PC-9 (cell line): ENCODE measurements at regions of chr10 and their contacts with region 1.

Region 1: GRCh38 chr10:69914398-69915214 is 112.9 kb downstream of the COL13A1 start:
- DNase-seq: peak in 1 of 2 experiments; percentile 72
- H3K4me3 ChIP-seq: no peak overlapping the region
- H3K27ac ChIP-seq: no peak overlapping the region
- H3K4me1 ChIP-seq: no peaks in the 10 kb centered on the region
- H3K27me3 ChIP-seq: no peaks in the 10 kb centered on the region
- CTCF ChIP-seq: peak; percentile 96

Region 2: DNA sequence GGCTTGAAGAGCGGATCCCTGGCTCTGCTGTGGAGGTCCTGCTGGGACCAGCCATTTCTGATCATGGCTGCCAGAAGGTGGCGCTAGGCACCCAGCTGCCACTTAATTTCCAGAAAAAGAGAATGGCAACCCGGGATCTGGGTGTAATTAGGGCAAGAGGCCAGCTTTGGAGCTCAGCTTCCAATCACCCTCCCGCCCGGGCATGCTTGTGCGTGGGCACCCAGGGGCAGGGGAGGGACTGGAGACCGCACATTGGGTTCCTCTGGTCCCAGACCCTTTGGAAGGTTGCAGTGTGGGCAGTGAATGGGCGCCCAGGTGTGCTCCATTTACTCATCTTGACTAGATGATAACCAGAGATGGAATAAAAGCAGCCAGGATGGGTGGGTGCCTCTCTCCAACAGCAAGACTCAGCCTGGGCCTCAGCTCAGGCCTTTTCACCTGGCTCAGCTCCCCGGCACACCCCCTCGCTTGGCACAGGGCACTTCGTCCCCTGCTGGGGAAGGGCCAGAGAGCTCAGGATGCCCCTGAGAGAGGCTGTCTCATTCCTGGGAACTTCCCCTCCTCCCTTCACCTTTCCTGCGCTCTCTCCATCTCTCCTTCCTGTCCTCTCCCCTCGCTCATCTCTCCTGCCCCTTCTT is 269.8 kb before region 1 on chr10:
- CTCF ChIA-PET with region 1: no interaction called
- POLR2A ChIA-PET with region 1: no interaction called
- intact Hi-C with region 1: loop called (anchors 1 kb)
- DNase-seq: peak; percentile 46 to 68
- H3K4me3 ChIP-seq: no peak overlapping the region
- H3K27ac ChIP-seq: no peak overlapping the region
- H3K4me1 ChIP-seq: peaks cover 10% of the 10 kb centered on the region
- H3K27me3 ChIP-seq: peaks cover 35% of the 10 kb centered on the region
- CTCF ChIP-seq: peak; percentile 95

Region 3: DNA sequence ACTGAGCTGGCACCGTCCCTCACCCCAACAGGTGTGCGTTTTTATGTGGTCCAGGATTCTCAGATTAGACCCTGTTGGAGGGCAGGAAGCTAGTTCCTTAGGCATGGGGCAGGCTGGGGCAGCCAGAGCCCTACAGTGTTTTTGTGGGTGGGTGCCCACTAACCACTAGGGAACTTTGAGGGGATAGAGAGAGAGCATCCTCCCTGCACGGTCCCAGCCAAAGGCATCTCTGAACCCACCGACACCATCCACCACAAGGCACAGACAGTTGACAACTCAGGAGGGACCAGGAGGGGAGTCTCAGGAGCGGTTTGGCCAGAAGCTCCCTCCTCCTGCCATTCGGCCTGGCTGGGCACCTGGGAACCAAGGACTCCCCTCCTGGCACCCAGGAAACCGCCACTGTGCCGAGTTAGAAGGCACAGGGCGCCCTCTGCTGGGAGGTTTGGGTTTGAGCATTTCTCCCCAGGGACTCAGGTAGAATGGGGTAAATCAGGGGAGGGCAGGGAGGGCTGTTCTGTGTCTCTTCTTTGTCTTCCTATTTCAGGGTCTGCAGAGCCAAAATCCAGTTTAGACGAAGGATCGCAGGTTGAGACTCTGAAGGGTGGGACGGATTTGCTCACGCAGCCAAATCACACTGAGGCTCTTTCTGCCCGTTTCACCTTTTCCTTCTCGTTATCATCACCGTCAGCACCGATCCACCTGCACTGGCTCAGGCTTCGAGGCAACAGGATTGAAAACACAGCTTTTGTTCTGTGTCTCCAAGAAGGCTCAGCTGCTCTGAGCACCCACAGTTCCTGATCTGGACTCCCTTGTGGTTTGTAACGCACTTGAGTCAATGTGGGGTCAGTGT is 197.7 kb before region 1 on chr10:
- CTCF ChIA-PET with region 1: no interaction called
- POLR2A ChIA-PET with region 1: no interaction called
- intact Hi-C with region 1: loop called (anchors 5 kb)
- DNase-seq: peak in 1 of 2 experiments; percentile 66
- H3K4me3 ChIP-seq: no peak overlapping the region
- H3K27ac ChIP-seq: no peak overlapping the region
- H3K4me1 ChIP-seq: no peaks in the 10 kb centered on the region
- H3K27me3 ChIP-seq: peaks cover 63% of the 10 kb centered on the region
- CTCF ChIP-seq: peak; percentile 93

Region 4: GRCh38 chr10:69800109-69800508 is 114.5 kb before region 1 on chr10:
- CTCF ChIA-PET with region 1: interaction called, 4 read pairs
- POLR2A ChIA-PET with region 1: no interaction called
- intact Hi-C with region 1: loop called (anchors 1 kb)
- DNase-seq: peak; percentile 48 to 49
- H3K4me3 ChIP-seq: no peak overlapping the region
- H3K27ac ChIP-seq: no peak overlapping the region
- H3K4me1 ChIP-seq: peaks cover 32% of the 10 kb centered on the region; the same call in 1 of the 2 replicates
- H3K27me3 ChIP-seq: no peaks in the 10 kb centered on the region
- CTCF ChIP-seq: peak; percentile 82

Region 5: GRCh38 chr10:69861251-69862240 is 53.1 kb before region 1 on chr10:
- CTCF ChIA-PET with region 1: interaction called, 7 read pairs
- POLR2A ChIA-PET with region 1: no interaction called
- intact Hi-C with region 1: loop called (anchors 1 kb)
- DNase-seq: peak; percentile 63 to 93
- H3K4me3 ChIP-seq: no peak overlapping the region
- H3K27ac ChIP-seq: peak overlapping the region; percentile 79
- H3K4me1 ChIP-seq: peaks cover 66% of the 10 kb centered on the region
- H3K27me3 ChIP-seq: no peaks in the 10 kb centered on the region
- CTCF ChIP-seq: peak; percentile 58; the same call in 1 of the 2 replicates

Region 6: GRCh38 chr10:70048030-70048723 is 133.6 kb after region 1 on chr10:
- CTCF ChIA-PET with region 1: no interaction called
- POLR2A ChIA-PET with region 1: no interaction called
- intact Hi-C with region 1: no loop called
- DNase-seq: no peak
- H3K4me3 ChIP-seq: no peak overlapping the region
- H3K27ac ChIP-seq: no peak overlapping the region
- H3K4me1 ChIP-seq: no peaks in the 10 kb centered on the region
- H3K27me3 ChIP-seq: peaks cover 41% of the 10 kb centered on the region
- CTCF ChIP-seq: no peak

Region 7: GRCh38 chr10:70106958-70107791 is 192.6 kb after region 1 on chr10:
- CTCF ChIA-PET with region 1: no interaction called
- POLR2A ChIA-PET with region 1: no interaction called
- intact Hi-C with region 1: no loop called
- DNase-seq: no peak
- H3K4me3 ChIP-seq: no peak overlapping the region
- H3K27ac ChIP-seq: no peak overlapping the region
- H3K4me1 ChIP-seq: no peaks in the 10 kb centered on the region
- H3K27me3 ChIP-seq: no peaks in the 10 kb centered on the region
- CTCF ChIP-seq: peak; percentile 47; the same call in 1 of the 2 replicates